Activated CD4-positive, alpha-beta T cell treated with anti-CD3 and anti-CD28 coated beads for 36 hours (primary cell): ENCODE measurements at regions of chr3 and their contacts with region 1.

Region 1: DNA sequence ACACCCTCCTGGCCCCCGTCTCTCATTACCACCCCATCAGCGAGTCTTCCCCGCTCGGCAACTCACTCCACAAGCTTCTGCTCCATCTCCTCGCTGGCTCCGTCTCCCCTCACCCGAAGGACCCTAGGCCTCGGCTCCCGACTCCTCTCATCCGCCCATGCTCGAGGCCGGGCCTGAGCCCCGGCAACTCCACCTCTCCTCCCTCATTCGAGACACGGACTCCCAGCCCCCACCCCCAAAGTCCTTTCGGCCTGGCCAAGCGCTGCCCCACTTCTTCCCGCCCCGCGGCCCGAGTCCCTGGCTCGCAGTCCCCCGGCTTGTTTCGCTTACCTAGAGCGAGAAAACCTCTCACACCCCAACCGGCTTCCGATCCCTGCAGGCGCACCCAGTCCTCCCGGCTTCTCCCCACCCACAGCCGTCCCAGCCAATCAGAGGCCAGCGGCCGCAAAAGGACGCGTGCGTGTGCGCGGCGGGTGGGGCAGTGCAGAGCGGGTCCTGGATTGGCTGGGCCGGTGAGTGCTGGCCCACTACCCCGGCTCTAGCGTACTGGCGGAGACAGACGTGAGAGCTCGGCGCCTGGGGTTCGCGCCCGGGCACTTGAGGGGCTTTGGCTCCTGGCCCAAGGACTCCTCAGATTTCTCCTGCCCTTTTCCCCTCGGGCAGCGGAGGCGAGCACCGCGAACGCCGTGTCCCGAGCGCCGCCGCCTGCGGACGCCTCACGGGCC is at the start of gene HIGD1A:
- DNase-seq: peak; percentile 97
- ATAC-seq: peak; percentile 99
- H3K4me3 Mint-ChIP-seq: peak within 1 kb of the TSS; percentile 91
- H3K27ac Mint-ChIP-seq: peak within 1 kb of the TSS; percentile 86
- H3K4me1 Mint-ChIP-seq: peaks cover 41% of the 10 kb centered on the region
- H3K27me3 Mint-ChIP-seq: peaks cover 6% of the 10 kb centered on the region
- total RNA-seq, gene HIGD1A: 74.9 to 77.8 TPM

Region 2: GRCh38 chr3:42012935-42013690 is 791.2 kb before region 1 on chr3:
- CTCF ChIA-PET with region 1: no interaction called
- POLR2A ChIA-PET with region 1: no interaction called
- intact Hi-C with region 1: loop called in 1 of 2 experiments (anchors 2 kb)
- DNase-seq: peak; percentile 88
- ATAC-seq: peak; percentile 75
- H3K4me3 Mint-ChIP-seq: peak overlapping the region; percentile 90
- H3K27ac Mint-ChIP-seq: peak overlapping the region; percentile 92
- H3K4me1 Mint-ChIP-seq: peaks cover 46% of the 10 kb centered on the region
- H3K27me3 Mint-ChIP-seq: no peaks in the 10 kb centered on the region

Region 3: GRCh38 chr3:42600111-42600988 is 203.9 kb before region 1 on chr3 and contains the start of gene NKTR:
- CTCF ChIA-PET with region 1: no interaction called
- POLR2A ChIA-PET with region 1: no interaction called
- intact Hi-C with region 1: loop called in 1 of 2 experiments (anchors 1 kb)
- DNase-seq: peak; percentile 100
- ATAC-seq: peak; percentile 91
- H3K4me3 Mint-ChIP-seq: peak within 1 kb of the TSS; percentile 80
- H3K27ac Mint-ChIP-seq: peak within 1 kb of the TSS; percentile 95
- H3K4me1 Mint-ChIP-seq: peaks cover 33% of the 10 kb centered on the region
- H3K27me3 Mint-ChIP-seq: no peaks in the 10 kb centered on the region
- total RNA-seq, gene NKTR: 50.8 to 59.2 TPM

Region 4: DNA sequence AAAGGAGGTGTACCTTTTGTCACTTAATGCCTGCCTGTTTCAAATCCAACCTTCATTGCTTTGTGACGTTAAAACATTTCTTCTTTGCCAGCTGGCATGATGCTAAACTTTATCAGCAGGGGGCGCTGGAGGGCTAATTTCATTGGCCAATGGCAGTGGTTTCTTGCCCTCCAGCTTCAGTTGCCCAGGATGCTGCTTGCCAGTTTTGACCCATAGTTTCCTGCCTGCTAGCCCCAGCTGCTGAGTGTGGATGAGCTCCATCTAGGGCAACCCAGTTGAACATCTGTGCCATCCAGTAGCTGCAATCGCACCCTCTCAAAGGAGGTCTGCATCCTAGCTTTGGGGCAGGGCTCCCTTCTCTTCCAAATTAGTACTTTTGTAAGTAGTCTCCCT is 27.0 kb after region 1 on chr3:
- CTCF ChIA-PET with region 1: interaction called, 5 read pairs
- POLR2A ChIA-PET with region 1: interaction called, 9 read pairs
- intact Hi-C with region 1: loop called in 1 of 2 experiments (anchors 1 kb)
- DNase-seq: peak; percentile 90
- ATAC-seq: peak; percentile 92
- H3K4me3 Mint-ChIP-seq: no peak overlapping the region
- H3K27ac Mint-ChIP-seq: no peak overlapping the region
- H3K4me1 Mint-ChIP-seq: peaks cover 5% of the 10 kb centered on the region
- H3K27me3 Mint-ChIP-seq: peaks cover 2% of the 10 kb centered on the region

Region 5: DNA sequence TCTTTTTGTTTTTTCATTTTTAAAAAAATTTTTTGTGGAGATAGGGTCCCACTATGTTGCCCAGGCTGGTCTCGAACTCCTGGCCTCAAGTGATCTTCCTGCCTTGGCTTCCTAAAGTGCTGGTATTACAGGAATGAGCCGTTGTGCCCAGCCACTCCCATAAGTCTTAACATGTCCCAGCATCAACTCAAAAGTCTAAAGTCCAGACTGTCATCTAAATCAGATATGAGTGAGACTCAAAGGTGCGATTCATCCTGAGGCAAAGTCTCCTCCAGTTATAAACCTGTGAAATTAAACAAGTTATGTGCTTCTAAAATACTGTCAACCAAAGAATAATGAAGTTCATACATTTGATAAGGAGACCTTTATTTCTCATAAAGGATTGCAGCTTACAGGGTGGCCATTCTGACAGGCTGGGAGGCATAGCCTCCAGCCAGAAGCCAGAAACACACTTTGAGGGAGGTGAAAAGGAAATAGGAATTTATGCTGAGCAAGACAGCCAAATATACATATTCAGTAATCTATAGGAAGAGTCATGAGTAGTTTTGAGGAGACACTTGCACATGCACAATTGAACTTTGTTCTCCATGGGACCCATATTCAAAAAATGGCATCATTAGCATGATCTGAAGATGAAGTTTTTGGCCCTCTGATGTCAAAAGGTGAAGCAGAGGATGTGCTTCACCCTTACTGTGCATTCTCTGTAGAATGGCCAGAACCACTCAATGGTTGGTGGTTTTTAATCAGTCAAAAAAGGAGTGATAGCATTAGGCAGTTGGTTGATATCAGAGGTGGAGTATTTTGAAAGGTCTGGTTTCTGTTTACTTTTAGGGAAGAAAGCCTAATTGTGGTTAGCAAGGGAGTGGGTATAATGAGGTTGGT is 90.7 kb after region 1 on chr3:
- CTCF ChIA-PET with region 1: no interaction called
- POLR2A ChIA-PET with region 1: no interaction called
- intact Hi-C with region 1: no loop called
- DNase-seq: no peak
- ATAC-seq: no peak
- H3K4me3 Mint-ChIP-seq: no peak overlapping the region
- H3K27ac Mint-ChIP-seq: peak overlapping the region; percentile 15
- H3K4me1 Mint-ChIP-seq: no peaks in the 10 kb centered on the region
- H3K27me3 Mint-ChIP-seq: no peaks in the 10 kb centered on the region

Region 6: DNA sequence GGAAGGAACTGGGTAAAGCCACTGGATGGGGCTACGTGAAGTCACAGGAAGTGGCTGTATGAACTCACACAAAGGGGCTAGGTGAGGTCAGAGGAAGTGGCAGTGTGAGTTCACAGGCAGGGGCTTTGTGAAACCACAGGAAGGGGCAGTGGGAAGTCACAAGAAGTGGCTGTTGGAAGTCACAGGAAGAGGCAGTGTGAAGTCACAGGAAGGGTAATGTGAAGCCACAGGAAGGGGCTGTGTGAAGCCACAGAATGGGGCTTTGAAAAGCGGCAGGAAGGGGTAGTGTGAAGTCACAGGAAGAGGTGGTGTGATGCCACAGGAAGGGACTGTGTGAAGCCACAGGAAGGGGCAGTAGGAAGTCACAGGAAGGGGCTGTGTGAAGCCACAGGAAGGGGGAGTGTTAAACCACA is 209.5 kb after region 1 on chr3:
- CTCF ChIA-PET with region 1: no interaction called
- POLR2A ChIA-PET with region 1: no interaction called
- intact Hi-C with region 1: no loop called
- DNase-seq: peak; percentile 18
- ATAC-seq: peak; percentile 37
- H3K4me3 Mint-ChIP-seq: no peak overlapping the region
- H3K27ac Mint-ChIP-seq: no peak overlapping the region
- H3K4me1 Mint-ChIP-seq: peaks cover under 1% of the 10 kb centered on the region
- H3K27me3 Mint-ChIP-seq: no peaks in the 10 kb centered on the region

Region 7: GRCh38 chr3:43105596-43106292 is 301.5 kb after region 1 on chr3 and contains the start of gene POMGNT2:
- CTCF ChIA-PET with region 1: no interaction called
- POLR2A ChIA-PET with region 1: no interaction called
- intact Hi-C with region 1: loop called in 1 of 2 experiments (anchors 1 kb)
- DNase-seq: peak; percentile 94
- ATAC-seq: peak; percentile 97
- H3K4me3 Mint-ChIP-seq: peak within 1 kb of the TSS; percentile 72
- H3K27ac Mint-ChIP-seq: peak within 1 kb of the TSS; percentile 58
- H3K4me1 Mint-ChIP-seq: peaks cover 16% of the 10 kb centered on the region
- H3K27me3 Mint-ChIP-seq: no peaks in the 10 kb centered on the region
- total RNA-seq, gene POMGNT2: 8.3 to 8.6 TPM